PC-9 (cell line): ENCODE measurements at regions of chr14 and their contacts with region 1.

Region 1: DNA sequence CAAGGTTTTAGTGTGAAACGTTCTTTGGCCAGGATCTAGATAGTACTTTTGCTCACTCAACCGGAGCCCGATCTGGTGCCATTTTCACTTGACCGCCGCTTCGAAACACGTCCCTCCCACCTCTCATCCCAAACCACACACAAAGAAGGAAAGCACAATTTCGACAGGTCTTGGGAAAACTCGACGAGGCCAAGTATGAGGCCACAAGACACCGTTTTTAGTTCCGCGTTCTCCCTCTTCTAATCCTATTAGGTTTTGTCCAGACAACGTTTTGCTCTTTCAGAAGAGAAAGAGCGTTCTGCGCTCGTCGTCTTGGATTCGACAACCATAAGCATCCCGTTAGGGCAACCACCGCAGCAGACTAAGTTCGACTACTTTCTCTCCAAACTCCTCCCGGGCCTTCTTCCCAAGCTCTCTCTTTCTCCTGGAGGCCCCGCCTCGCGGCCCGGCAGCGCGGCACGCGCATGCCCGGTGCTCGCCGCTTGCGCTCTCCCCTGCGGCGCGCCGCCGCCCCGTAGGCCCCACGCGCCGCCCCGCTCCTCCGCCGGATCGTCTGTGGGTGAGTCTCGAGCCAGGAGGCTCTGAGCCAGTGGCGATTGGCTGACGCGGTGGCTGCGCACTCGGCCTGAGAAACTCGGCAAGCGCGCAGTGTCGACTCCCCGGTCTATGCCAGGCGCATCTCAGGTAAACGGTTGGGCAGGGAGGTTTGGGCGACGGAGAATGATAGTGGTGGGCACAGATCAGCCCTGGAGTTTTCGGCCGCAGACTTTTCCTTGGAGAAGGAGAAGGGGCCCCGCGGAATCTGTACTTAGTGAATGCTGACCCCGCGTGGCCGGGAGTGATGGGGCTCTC is at the start of gene MIPOL1:
- DNase-seq: peak; percentile 63 to 86
- H3K4me3 ChIP-seq: peak within 1 kb of the TSS; percentile 67
- H3K27ac ChIP-seq: peak within 1 kb of the TSS; percentile 74
- H3K4me1 ChIP-seq: peaks cover 8% of the 10 kb centered on the region; the same call in 1 of the 2 replicates
- H3K27me3 ChIP-seq: no peaks in the 10 kb centered on the region
- CTCF ChIP-seq: no peak
- total RNA-seq, gene MIPOL1: 12.1 and 13.1 TPM in 2 replicates

Region 2: DNA sequence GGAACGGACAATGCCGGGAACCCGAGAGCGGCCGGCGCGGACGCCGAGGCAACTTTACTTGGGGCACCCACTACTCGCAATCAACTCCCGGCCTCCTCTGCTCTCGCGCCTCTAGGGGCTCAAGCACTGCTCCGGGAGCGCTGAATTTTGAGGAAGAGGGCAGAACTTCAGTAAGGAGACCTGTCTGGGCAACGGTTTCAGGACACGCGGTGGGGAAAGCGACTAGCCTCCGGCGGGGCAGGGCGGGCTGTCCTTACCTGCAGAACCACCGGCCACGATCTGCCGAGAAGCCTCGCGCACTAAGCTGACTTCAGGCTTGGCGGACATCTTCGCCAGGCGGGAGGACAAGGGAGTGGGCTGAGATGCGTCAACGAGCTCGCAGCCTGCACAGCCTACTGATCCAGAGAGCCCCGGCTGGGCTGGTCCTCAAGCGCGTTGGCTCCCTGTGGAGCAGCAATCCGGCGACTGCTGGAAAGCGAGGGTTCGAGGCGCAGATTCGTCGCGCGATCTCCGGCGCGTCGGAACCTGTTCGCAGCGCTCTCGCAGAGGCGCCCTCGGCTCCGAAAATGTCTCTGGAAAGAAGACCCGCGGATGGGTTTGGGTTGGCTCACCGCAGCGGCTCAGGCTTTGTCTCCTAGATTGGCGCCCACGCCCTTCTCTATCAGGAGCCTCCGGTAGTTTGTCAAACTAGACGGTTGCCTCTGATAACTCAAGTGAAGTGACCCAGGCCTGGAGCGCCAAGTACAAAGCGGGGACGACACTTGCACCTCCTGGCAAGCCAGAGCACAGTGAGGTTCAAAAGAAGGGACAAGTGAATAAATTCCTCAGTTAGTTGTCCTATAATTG is 25.4 kb before region 1 on chr14 and contains the start of gene SLC25A21:
- CTCF ChIA-PET with region 1: no interaction called
- POLR2A ChIA-PET with region 1: interaction called, 3 read pairs
- intact Hi-C with region 1: loop called (anchors 2 kb)
- DNase-seq: peak; percentile 63 to 65
- H3K4me3 ChIP-seq: peak within 1 kb of the TSS; percentile 80
- H3K27ac ChIP-seq: peak within 1 kb of the TSS; percentile 76
- H3K4me1 ChIP-seq: peaks cover 12% of the 10 kb centered on the region
- H3K27me3 ChIP-seq: no peaks in the 10 kb centered on the region
- CTCF ChIP-seq: no peak
- total RNA-seq, gene SLC25A21: 0.38 and 3.2 TPM in 2 replicates